Naive thymus-derived CD8-positive, alpha-beta T cell (primary cell): ENCODE measurements at regions of chr1 and their contacts with region 1.

Region 1: DNA sequence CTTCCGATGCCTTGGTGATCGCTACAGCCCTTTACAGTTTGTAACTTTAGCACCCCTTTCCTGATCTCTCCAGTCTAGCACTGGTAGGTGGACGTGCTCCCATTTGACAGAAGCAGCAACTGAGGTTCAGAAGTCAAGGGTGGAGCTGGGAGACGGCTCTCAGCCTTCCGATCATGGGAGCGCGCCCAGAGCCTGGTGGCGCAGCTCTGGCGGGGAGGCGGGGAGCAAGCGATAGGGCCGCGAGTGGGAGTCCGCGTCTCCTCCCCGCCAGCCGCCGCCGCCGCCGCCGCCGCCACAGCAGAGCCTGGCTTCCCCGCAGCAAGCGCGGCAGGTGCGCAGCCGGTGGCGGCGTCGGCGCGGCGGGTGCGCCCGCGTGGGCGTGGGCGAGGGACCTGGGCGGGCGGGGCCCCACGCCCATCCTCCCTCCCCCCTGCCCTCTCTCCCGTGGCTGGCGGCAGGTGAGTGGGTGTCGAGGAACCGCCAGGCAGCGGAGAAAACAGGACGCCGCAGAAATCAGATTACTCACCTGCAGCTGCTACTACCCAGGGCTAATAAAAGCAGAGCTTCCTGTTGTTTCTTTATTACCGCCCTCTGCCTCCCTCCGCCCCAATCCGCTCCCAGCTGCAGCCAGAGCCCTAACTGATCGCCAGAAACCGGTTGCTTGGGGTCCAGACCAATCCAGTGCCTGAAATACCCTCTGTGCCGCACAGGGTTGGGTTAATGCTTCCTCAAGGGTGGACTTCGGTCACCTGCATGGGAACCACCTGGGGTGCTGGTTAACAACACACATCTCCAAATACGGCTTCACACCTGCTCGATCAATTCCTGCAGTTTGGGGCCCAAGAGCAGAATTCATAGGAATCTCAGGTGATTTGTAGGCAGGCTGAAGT is 60.2 kb upstream of the ID3 start:
- DNase-seq: peak; percentile 71 to 93 (median 82)
- ATAC-seq: peak; percentile 80 to 84
- H3K4me3 Mint-ChIP-seq: peak overlapping the region; percentile 68 to 87 (median 80)
- H3K27ac Mint-ChIP-seq: peak overlapping the region; percentile 94 to 100 (median 96)
- H3K4me1 Mint-ChIP-seq: peaks cover 58 to 92% (median 91%) of the 10 kb centered on the region in 4 donors
- H3K27me3 Mint-ChIP-seq: peaks cover 0 to 7% (median 0%) of the 10 kb centered on the region in 5 donors

Region 2: GRCh38 chr1:23539698-23540266 is 79.8 kb before region 1 on chr1:
- POLR2A ChIA-PET with region 1: interaction called, 14 read pairs
- DNase-seq: peak; percentile 73 to 94 (median 92)
- ATAC-seq: peak; percentile 95 to 96
- H3K4me3 Mint-ChIP-seq: peak overlapping the region; percentile 28 to 74 (median 49)
- H3K27ac Mint-ChIP-seq: peak overlapping the region in 9 of 10 donors; percentile 12 to 87 (median 74)
- H3K4me1 Mint-ChIP-seq: peaks cover 9 to 23% (median 14%) of the 10 kb centered on the region in 4 donors
- H3K27me3 Mint-ChIP-seq: no peaks in the 10 kb centered on the region

Region 3: GRCh38 chr1:23577056-23578004 is 42.2 kb before region 1 on chr1:
- POLR2A ChIA-PET with region 1: interaction called, 34 read pairs
- DNase-seq: no peak
- ATAC-seq: peak; percentile 68 to 78
- H3K4me3 Mint-ChIP-seq: peak overlapping the region; percentile 21 to 65 (median 58)
- H3K27ac Mint-ChIP-seq: peak overlapping the region; percentile 70 to 94 (median 86)
- H3K4me1 Mint-ChIP-seq: peaks cover 28 to 74% (median 69%) of the 10 kb centered on the region in 4 donors
- H3K27me3 Mint-ChIP-seq: no peaks in the 10 kb centered on the region

Region 4: GRCh38 chr1:23591460-23592208 is 27.9 kb before region 1 on chr1:
- POLR2A ChIA-PET with region 1: interaction called, 182 read pairs
- DNase-seq: peak in 2 of 10 donors; percentile 49 to 79
- ATAC-seq: peak; percentile 43 to 60
- H3K4me3 Mint-ChIP-seq: peak overlapping the region; percentile 6 to 70 (median 58)
- H3K27ac Mint-ChIP-seq: peak overlapping the region; percentile 67 to 95 (median 84)
- H3K4me1 Mint-ChIP-seq: peaks cover 38 to 84% (median 71%) of the 10 kb centered on the region in 4 donors
- H3K27me3 Mint-ChIP-seq: no peaks in the 10 kb centered on the region

Region 5: DNA sequence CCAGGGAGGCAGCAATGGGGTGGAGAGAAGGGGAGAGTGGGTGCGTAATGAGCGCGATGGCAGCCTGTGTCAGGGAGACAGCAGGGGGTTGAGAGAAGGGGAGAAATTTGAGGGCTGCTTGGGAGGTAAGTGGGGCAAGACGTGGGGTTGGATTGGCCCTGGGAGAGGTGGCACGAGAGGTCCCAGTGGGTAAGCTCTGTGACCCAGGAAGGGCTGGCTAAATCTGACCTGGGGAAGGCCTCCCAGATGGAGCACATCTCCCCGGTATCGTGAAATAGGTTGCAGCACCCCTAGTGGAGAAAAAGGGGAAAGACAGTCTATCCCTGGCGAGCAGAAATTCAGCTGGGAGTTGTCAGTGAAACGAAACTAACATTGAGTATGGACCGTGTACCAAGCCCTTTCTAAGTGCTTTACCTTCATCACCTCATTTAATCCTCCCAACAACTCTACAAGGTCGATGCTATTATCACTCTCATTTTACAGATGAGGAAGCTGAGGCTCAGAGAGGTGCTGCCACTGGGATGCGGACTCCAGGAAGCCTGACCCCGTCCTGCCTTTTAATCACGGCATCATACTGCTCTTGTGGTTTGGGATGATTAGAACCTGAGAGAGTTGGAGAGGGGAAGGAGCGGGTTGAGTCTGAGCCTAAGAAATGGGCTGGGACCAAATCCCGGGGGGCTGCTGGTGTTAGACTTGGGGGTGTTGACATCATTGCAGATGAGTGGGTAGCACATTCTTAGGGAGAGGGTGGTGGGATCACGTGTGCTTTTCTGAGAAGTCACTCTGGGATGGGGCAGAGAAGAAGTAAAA is 15.5 kb after region 1 on chr1:
- POLR2A ChIA-PET with region 1: interaction called, 59 read pairs
- DNase-seq: peak in 9 of 10 donors; percentile 52 to 77 (median 67)
- ATAC-seq: peak; percentile 83 to 84
- H3K4me3 Mint-ChIP-seq: peak overlapping the region; percentile 52 to 80 (median 74)
- H3K27ac Mint-ChIP-seq: peak overlapping the region; percentile 89 to 98 (median 93)
- H3K4me1 Mint-ChIP-seq: peaks cover 20 to 51% (median 41%) of the 10 kb centered on the region in 4 donors
- H3K27me3 Mint-ChIP-seq: no peaks in the 10 kb centered on the region

Region 6: GRCh38 chr1:23699280-23700179 is 80.0 kb after region 1 on chr1:
- POLR2A ChIA-PET with region 1: no interaction called
- DNase-seq: no peak
- ATAC-seq: no peak
- H3K4me3 Mint-ChIP-seq: no peak overlapping the region
- H3K27ac Mint-ChIP-seq: no peak overlapping the region
- H3K4me1 Mint-ChIP-seq: peaks cover 19 to 53% (median 42%) of the 10 kb centered on the region in 4 donors
- H3K27me3 Mint-ChIP-seq: no peaks in the 10 kb centered on the region